ENCODE measurements at regions of chr6 and their contacts with region 1.

Region 1: GRCh38 chr6:35562053-35562452 is 49.4 kb upstream of the TULP1 start:
- DNase-seq: peak; percentile 33
- H3K4me3 ChIP-seq: no peak overlapping the region
- H3K27ac ChIP-seq: no peak overlapping the region
- H3K4me1 ChIP-seq: no peaks in the 10 kb centered on the region
- H3K27me3 ChIP-seq: peaks cover 6% of the 10 kb centered on the region
- CTCF ChIP-seq: no peak

Region 2: DNA sequence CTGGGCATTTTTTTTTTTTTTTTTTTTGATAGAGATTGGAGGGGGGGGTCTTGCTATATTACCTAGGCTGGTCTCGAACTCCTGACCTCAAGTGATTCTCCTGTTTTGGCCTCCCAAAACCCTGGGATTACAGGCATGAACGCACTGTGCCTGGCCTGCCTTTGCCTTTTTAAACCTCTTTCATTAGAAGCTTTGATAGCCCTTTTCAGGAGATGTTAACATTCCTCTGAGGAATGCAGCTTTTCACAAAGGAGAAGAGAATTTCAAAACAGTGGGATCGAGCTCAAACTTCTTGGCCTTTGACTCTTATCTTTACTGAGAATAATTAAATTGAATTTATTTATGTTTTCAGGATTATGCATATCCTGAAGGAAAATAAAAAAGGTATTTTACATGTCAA is 431.1 kb after region 1 on chr6:
- CTCF ChIA-PET with region 1: no interaction called
- POLR2A ChIA-PET with region 1: interaction called, 14 read pairs
- intact Hi-C with region 1: no loop called
- DNase-seq: no peak
- H3K4me3 ChIP-seq: no peak overlapping the region
- H3K27ac ChIP-seq: no peak overlapping the region
- H3K4me1 ChIP-seq: no peaks in the 10 kb centered on the region
- H3K27me3 ChIP-seq: no peaks in the 10 kb centered on the region
- CTCF ChIP-seq: no peak

Measured in A673 (cell line).